GM10248 (cell line): ENCODE measurements at regions of chr5 and their contacts with region 1.

Region 1: GRCh38 chr5:85096421-85096820 is 711.7 kb upstream of the EDIL3 start:
- DNase-seq: no peak
- CTCF ChIP-seq: no peak

Region 2: GRCh38 chr5:84752780-84753179 is 343.6 kb before region 1 on chr5:
- CTCF ChIA-PET with region 1: no interaction called
- POLR2A ChIA-PET with region 1: no interaction called
- DNase-seq: no peak
- CTCF ChIP-seq: no peak

Region 3: DNA sequence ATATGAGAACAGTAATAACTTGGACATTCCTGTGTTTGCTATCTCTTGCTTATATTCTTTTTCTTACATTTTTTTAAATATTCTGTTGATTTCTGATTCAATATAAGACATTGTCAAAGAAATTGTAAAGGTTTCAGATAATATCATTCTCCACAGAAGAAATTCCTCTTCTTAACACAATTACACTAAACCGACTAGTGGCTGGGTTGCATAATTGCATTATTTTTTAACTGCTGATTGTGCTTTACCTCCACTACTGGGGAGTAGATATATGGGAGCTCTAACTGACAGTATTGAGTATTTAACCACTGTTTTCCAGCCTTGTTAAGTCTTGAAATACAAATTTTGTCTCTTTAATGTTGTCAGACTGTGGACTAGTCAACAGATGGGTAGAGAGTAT is 12.1 kb after region 1 on chr5:
- CTCF ChIA-PET with region 1: interaction called, 11 read pairs
- POLR2A ChIA-PET with region 1: no interaction called
- DNase-seq: no peak
- CTCF ChIP-seq: no peak